Psoas muscle (tissue), 8 donors: ENCODE measurements at regions of chr7 and their contacts with region 1.

Region 1: GRCh38 chr7:27662490-27663205 is at the start of gene HIBADH:
- DNase-seq: peak; percentile 99
- ATAC-seq: peak; percentile 97 to 99 (median 99)
- H3K4me3 ChIP-seq: peak within 1 kb of the TSS; percentile 72
- H3K27ac ChIP-seq: peak within 1 kb of the TSS; percentile 88
- H3K4me1 ChIP-seq: no peaks in the 10 kb centered on the region
- H3K27me3 ChIP-seq: no peaks in the 10 kb centered on the region
- CTCF ChIP-seq: no peak
- total RNA-seq, gene HIBADH: 43.3 to 67.7 (median 51.9) TPM

Region 2: GRCh38 chr7:27576360-27576944 is 86.2 kb before region 1 on chr7:
- intact Hi-C with region 1: no loop called
- DNase-seq: no peak
- ATAC-seq: peak in 3 of 4 donors; percentile 40 to 80 (median 42)
- H3K4me3 ChIP-seq: no peak overlapping the region
- H3K27ac ChIP-seq: no peak overlapping the region
- H3K4me1 ChIP-seq: no peaks in the 10 kb centered on the region
- H3K27me3 ChIP-seq: no peaks in the 10 kb centered on the region
- CTCF ChIP-seq: peak; percentile 75

Region 3: DNA sequence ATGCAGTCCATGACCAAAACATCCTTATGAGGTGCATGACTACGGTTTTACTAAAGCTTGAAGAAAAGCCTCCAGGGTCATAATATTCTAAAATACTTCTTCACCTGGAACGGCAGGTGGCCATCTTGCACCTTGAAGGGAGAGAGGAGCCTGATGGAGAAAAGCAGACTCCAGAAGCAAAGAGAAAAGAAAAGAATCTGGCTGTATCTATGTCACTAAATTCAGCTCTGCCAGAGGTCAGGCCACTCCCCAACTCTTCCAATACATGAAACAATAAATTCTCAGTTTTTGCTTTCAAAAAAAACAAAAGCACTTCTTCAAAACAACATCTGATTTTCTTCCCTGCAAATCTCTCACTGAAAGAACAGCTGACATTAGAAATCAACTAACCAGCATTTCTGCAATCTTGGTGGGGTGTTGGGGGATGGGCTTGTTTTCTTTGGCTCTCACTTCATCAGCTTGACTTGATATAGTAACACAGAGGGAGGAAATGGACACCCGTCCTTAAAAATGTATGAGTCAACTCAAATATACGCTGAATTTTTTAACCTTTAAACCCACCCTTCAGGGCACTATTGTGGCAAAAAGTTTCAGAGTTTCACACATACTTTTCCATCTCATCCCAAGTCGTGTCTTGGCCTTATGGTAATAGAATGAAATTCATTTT is 21.6 kb before region 1 on chr7:
- intact Hi-C with region 1: no loop called
- DNase-seq: no peak
- ATAC-seq: peak in 3 of 4 donors; percentile 40 to 73 (median 53)
- H3K4me3 ChIP-seq: no peak overlapping the region
- H3K27ac ChIP-seq: peak overlapping the region; percentile 37
- H3K4me1 ChIP-seq: peaks cover 13% of the 10 kb centered on the region
- H3K27me3 ChIP-seq: no peaks in the 10 kb centered on the region
- CTCF ChIP-seq: no peak

Region 4: GRCh38 chr7:27739909-27740448 is 77.3 kb after region 1 on chr7 and contains the start of gene TAX1BP1:
- intact Hi-C with region 1: loop called (anchors 1 to 5 kb)
- DNase-seq: peak; percentile 95 to 98
- ATAC-seq: peak; percentile 99
- H3K4me3 ChIP-seq: peak within 1 kb of the TSS; percentile 94
- H3K27ac ChIP-seq: peak within 1 kb of the TSS; percentile 100
- H3K4me1 ChIP-seq: peaks cover 41% of the 10 kb centered on the region
- H3K27me3 ChIP-seq: no peaks in the 10 kb centered on the region
- CTCF ChIP-seq: no peak
- total RNA-seq, gene TAX1BP1: 109 to 143 (median 125) TPM

Region 5: GRCh38 chr7:27842094-27842692 is 179.5 kb after region 1 on chr7:
- intact Hi-C with region 1: no loop called
- DNase-seq: no peak
- ATAC-seq: peak in 2 of 4 donors; percentile 53 to 65
- H3K4me3 ChIP-seq: no peak overlapping the region
- H3K27ac ChIP-seq: no peak overlapping the region
- H3K4me1 ChIP-seq: no peaks in the 10 kb centered on the region
- H3K27me3 ChIP-seq: no peaks in the 10 kb centered on the region
- CTCF ChIP-seq: no peak

Region 6: DNA sequence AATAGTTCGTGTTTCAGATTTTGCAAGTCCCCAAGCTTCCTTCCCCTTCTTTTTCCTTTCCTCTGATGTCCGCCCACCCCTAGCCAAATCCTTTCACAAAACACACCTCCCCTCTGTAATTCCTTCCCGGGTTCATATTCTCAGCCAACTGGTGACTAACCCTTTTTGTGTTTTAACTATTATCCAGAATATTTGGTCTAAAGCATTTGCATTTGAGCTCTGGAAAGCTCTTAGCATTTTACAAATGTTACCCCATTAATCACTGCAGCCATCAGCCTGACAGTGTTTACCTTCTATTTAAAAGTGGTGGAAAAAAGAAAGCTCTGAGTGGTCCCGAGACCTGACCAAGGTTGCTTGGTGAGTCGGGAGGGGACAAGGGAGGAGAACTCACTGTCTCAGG is 888.7 kb after region 1 on chr7:
- intact Hi-C with region 1: no loop called
- DNase-seq: no peak
- ATAC-seq: no peak
- H3K4me3 ChIP-seq: no peak overlapping the region
- H3K27ac ChIP-seq: no peak overlapping the region
- H3K4me1 ChIP-seq: no peaks in the 10 kb centered on the region
- H3K27me3 ChIP-seq: no peaks in the 10 kb centered on the region
- CTCF ChIP-seq: no peak